PC-9 (cell line): ENCODE measurements at regions of chr12 and their contacts with region 1.

Region 1: DNA sequence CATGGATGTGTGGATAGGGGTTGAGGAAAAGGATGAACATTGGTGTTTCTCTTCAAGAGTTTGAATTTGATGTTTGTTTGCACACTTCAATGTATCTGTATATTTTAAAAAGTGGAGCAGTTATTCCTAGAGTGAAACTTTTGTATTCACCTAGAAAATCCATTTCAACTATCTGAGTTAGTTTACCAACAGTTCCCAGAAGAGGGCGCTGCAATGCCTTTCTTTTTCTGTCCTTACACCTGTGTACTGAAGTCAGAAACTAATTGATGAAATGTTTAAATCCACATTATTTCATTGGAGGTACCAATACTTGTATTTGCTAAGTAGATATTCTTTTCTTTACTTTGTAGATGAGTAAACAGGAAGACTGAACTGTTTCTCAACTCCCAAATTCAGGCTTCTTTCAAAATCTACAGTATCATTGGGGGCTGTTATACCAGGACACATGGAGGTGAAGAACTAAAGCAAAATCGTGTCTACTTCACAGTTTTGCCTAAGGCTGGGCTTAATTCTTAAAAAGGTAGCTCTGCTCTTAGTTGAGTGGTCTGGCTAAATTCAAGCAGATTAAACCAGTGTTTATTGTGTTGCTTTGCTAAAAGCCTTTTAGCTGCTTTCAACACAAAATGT is 26.6 kb upstream of the KLRB1 start:
- DNase-seq: peak; percentile 43 to 56
- H3K4me3 ChIP-seq: no peak overlapping the region
- H3K27ac ChIP-seq: no peak overlapping the region
- H3K4me1 ChIP-seq: peaks cover 20% of the 10 kb centered on the region
- H3K27me3 ChIP-seq: no peaks in the 10 kb centered on the region
- CTCF ChIP-seq: peak; percentile 90

Region 2: GRCh38 chr12:9331218-9331626 is 303.1 kb before region 1 on chr12:
- CTCF ChIA-PET with region 1: interaction called, 3 read pairs
- POLR2A ChIA-PET with region 1: no interaction called
- intact Hi-C with region 1: loop called (anchors 5 kb)
- DNase-seq: peak in 1 of 2 experiments; percentile 65
- H3K4me3 ChIP-seq: no peak overlapping the region
- H3K27ac ChIP-seq: no peak overlapping the region
- H3K4me1 ChIP-seq: no peaks in the 10 kb centered on the region
- H3K27me3 ChIP-seq: no peaks in the 10 kb centered on the region
- CTCF ChIP-seq: peak; percentile 96

Region 3: DNA sequence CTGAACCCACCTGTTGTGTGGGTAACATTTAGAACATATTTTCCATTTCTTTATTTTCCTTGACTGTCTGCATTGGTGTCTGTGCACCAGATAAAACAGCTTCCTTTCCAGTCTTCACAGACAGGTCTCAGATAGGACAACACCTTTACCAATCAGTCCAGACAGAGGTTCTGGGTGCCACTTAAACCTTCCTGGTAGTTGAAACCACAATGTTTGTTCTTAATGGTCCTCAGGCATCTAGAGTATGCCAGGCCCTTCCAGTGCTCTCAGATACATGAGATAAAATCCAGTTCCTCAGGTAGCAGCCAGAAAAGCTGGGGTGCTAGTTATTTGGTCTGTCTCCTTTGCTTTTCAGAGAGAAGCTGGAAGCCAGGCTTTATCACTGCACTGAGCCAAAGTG is 28.2 kb after region 1 on chr12:
- CTCF ChIA-PET with region 1: no interaction called
- POLR2A ChIA-PET with region 1: interaction called, 4 read pairs
- intact Hi-C with region 1: loop called (anchors 1 kb)
- DNase-seq: peak; percentile 63 to 87
- H3K4me3 ChIP-seq: no peak overlapping the region
- H3K27ac ChIP-seq: peak overlapping the region; percentile 43
- H3K4me1 ChIP-seq: peaks cover 27% of the 10 kb centered on the region
- H3K27me3 ChIP-seq: no peaks in the 10 kb centered on the region
- CTCF ChIP-seq: no peak

Region 4: DNA sequence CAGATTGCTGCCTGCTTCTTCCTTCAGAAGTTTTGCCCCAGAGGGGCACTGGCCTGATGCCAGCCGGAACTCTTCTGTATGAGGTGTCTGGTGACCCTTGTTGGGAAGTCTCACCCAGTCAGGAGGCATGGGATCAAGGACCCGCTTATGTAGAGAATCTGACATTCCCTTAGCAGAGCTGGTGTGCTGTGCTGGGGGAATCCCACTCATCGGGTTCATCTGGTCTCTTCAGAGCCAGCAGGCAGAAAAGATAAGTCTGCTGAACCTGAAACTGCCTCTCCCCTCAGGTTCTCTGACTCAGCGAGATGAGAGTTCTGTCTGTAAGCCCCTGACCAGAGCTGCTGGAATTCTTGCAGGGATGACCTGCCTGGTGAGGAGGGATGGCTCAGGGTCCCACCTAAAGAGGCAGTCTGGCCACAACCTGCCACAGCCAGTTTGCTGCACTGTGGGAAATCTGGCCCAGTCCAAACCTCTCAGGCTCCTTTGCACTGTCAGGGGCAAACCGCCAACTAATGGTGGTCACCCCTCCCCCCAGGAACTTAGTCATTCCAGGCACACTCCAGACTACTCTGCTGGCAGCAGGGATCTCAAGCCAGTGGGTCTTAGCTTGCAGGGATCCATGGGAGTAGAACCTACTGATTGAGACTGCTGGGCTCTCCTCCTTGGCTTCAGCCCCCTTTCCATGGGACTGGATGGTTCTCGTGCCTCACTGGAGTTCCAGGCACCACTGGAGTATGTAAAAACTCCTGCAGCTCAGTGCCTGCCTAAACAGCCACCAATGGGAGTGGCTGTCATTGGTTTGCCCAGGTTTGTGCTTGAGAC is 39.3 kb after region 1 on chr12:
- CTCF ChIA-PET with region 1: no interaction called
- POLR2A ChIA-PET with region 1: no interaction called
- intact Hi-C with region 1: loop called (anchors 1 kb)
- DNase-seq: peak; percentile 95 to 96
- H3K4me3 ChIP-seq: peak overlapping the region; percentile 5; the same call in 1 of the 2 replicates
- H3K27ac ChIP-seq: peak overlapping the region; percentile 79
- H3K4me1 ChIP-seq: peaks cover 35% of the 10 kb centered on the region
- H3K27me3 ChIP-seq: no peaks in the 10 kb centered on the region
- CTCF ChIP-seq: no peak

Region 5: GRCh38 chr12:9707864-9708808 is 73.8 kb after region 1 on chr12:
- CTCF ChIA-PET with region 1: interaction called, 3 read pairs
- POLR2A ChIA-PET with region 1: no interaction called
- intact Hi-C with region 1: loop called (anchors 1 kb)
- DNase-seq: peak in 1 of 2 experiments; percentile 21
- H3K4me3 ChIP-seq: no peak overlapping the region
- H3K27ac ChIP-seq: no peak overlapping the region
- H3K4me1 ChIP-seq: peaks cover 15% of the 10 kb centered on the region
- H3K27me3 ChIP-seq: no peaks in the 10 kb centered on the region
- CTCF ChIP-seq: peak; percentile 85

Region 6: GRCh38 chr12:9760699-9761418 is 126.6 kb after region 1 on chr12 and contains the start of gene CD69:
- CTCF ChIA-PET with region 1: no interaction called
- POLR2A ChIA-PET with region 1: no interaction called
- intact Hi-C with region 1: no loop called
- DNase-seq: no peak
- H3K4me3 ChIP-seq: no peak within 1 kb of the TSS
- H3K27ac ChIP-seq: no peak within 1 kb of the TSS
- H3K4me1 ChIP-seq: no peaks in the 10 kb centered on the region
- H3K27me3 ChIP-seq: no peaks in the 10 kb centered on the region
- CTCF ChIP-seq: no peak
- total RNA-seq, gene CD69: not detected in 2 replicates